ENCODE measurements at regions of chr3 and their contacts with region 1.

Region 1: DNA sequence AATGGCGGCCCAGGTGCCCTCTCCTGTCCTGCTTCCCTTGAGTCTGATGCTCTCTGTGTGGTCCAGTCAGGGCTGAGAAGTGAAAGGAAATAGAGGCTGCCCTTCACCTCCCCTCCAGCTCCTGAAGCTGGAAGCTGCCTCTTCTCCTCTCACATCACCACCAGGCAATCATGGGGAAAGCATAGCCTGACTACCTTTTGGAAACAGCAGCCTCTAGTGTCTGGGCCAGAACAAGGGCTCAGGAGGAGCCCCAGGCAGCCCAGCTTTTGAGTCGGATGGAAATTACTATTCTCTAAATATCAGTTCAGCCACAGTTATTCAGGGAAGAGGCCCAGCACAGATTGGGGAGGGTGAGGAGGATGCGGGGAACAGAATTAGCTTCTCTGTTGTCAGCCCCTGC is 43.3 kb upstream of the CCDC174 start:
- DNase-seq: no peak
- H3K4me3 ChIP-seq: no peak overlapping the region
- H3K27ac ChIP-seq: no peak overlapping the region
- H3K4me1 ChIP-seq: peaks cover 0 to 4% (median 1%) of the 10 kb centered on the region in 4 experiments; a peak in 4 of 7 replicates
- H3K27me3 ChIP-seq: peaks cover 0 to 9% (median 5%) of the 10 kb centered on the region in 4 experiments; a peak in 4 of 7 replicates
- CTCF ChIP-seq: peak; percentile 35 to 59 (median 56)
- EP300 ChIP-seq: no peak
- POLR2A ChIP-seq: no peak
- RAD21 ChIP-seq: peak; percentile 53 to 64

Region 2: GRCh38 chr3:14590569-14590968 is 17.7 kb before region 1 on chr3:
- CTCF ChIA-PET with region 1: interaction called, 14 read pairs
- POLR2A ChIA-PET with region 1: no interaction called
- DNase-seq: no peak
- H3K4me3 ChIP-seq: no peak overlapping the region
- H3K27ac ChIP-seq: no peak overlapping the region
- H3K4me1 ChIP-seq: peaks cover 0 to 2% (median 0%) of the 10 kb centered on the region in 4 experiments; a peak in 2 of 7 replicates
- H3K27me3 ChIP-seq: no peaks in the 10 kb centered on the region
- CTCF ChIP-seq: no peak
- EP300 ChIP-seq: no peak
- POLR2A ChIP-seq: no peak
- RAD21 ChIP-seq: no peak

Region 3: GRCh38 chr3:14626881-14627411 is 18.6 kb after region 1 on chr3:
- CTCF ChIA-PET with region 1: interaction called, 25 read pairs
- POLR2A ChIA-PET with region 1: no interaction called
- DNase-seq: no peak
- H3K4me3 ChIP-seq: no peak overlapping the region
- H3K27ac ChIP-seq: no peak overlapping the region
- H3K4me1 ChIP-seq: peaks cover 0 to 5% (median 0%) of the 10 kb centered on the region in 4 experiments; a peak in 3 of 7 replicates
- H3K27me3 ChIP-seq: no peaks in the 10 kb centered on the region
- CTCF ChIP-seq: no peak
- EP300 ChIP-seq: no peak
- POLR2A ChIP-seq: no peak
- RAD21 ChIP-seq: no peak

Measured in H1 (cell line).